CD4-positive, alpha-beta T cell (primary cell): ENCODE measurements at regions of chr4 and their contacts with region 1.

Region 1: DNA sequence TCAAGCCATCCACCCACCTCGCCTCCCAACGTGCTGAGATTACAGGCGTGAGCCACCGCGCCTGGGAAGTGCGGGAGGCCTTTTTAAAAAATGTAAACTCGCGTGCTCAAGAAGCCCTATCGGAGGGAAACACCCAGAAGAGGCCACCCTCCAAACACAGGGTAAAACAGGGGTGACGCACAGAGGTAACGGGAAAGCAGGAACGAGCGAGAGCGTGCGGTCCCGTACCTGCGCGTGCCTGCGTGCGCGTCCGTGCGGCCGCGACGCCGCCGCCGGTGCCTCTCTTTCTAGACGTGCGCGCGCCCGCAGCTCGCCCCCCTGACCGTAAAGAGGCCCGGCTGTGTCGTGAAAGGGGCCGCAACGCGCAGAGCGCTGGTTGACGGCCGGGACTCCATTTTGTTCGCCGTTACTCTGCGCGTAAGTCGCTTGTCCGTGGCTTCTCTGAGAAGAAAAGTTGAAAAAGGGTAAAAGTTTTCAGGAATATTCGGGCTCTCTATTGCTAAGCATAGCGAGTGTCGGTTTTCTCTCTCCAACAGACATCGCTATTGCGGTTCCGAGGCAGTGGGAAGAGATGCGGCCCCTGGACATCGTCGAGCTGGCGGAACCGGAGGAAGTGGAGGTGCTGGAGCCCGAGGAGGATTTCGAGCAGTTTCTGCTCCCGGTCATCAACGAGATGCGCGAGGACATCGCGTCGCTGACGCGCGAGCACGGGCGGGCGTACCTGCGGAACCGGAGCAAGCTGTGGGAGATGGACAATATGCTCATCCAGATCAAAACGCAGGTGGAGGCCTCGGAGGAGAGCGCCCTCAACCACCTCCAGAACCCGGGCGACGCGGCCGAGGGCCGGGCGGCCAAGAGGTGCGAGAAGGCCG is at the start of gene MRFAP1:
- DNase-seq: peak; percentile 90 to 99 (median 94)
- ATAC-seq: peak; percentile 78
- H3K4me3 ChIP-seq: peak within 1 kb of the TSS; percentile 77
- H3K4me3 Mint-ChIP-seq: peak within 1 kb of the TSS; percentile 100
- H3K27ac ChIP-seq: peak within 1 kb of the TSS; percentile 93 to 98
- H3K27ac Mint-ChIP-seq: peak within 1 kb of the TSS; percentile 99
- H3K4me1 ChIP-seq: peaks cover 38% of the 10 kb centered on the region
- H3K4me1 Mint-ChIP-seq: peaks cover 45% of the 10 kb centered on the region
- H3K27me3 ChIP-seq: no peaks in the 10 kb centered on the region
- H3K27me3 Mint-ChIP-seq: no peaks in the 10 kb centered on the region
- CTCF ChIP-seq: no peak
- total RNA-seq, gene MRFAP1: 172 to 181 TPM

Region 2: DNA sequence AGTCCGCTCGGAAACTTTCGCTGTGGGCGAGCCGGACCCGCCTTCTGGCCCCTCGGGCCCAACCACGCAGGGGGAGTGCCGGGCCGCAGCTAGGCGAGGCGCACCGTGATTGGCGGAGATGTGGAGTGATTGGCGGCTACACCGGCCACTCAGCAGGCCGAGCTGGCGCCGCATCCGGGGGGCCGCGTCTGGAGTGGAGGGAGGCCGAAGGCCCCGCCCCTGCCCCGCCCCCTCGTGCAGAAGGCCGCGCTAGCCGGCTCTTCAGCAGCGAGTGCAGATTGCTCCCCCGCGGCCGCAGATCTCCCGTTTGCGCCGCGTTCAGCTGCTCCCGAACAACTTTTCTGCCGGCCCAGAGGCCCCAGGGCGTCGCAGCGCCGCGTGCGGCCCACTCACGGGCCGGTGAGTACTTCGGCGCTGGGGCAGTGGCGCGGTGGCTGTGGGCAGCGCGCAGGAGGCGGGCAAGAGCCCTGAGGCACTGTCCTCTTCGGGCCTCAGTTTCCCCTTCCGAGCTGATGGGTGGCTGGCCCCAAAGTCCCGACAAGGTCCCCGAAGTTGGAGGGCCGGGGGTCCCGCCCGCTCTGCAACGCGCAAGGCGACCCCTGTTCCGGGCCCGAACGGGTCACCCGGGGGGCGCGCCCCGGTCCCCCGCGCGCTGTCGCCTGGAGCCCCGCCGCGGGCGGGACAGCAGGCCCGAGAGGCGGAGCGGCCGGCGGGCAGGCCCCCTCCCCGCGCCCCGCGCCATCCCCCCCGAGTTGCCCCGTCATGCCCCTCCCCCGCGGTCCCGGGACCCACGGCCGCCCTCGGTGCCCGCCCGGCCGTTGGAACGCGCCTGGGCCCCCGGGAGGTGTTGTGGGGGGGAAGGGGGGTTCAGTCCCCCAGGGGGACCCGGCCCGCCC is 370.7 kb before region 1 on chr4 and contains the start of gene WFS1:
- CTCF ChIA-PET with region 1: no interaction called
- POLR2A ChIA-PET with region 1: no interaction called
- intact Hi-C with region 1: loop called in 1 of 2 experiments (anchors 10 kb)
- DNase-seq: peak; percentile 89 to 99 (median 98)
- ATAC-seq: peak; percentile 99
- H3K4me3 ChIP-seq: peak within 1 kb of the TSS; percentile 64
- H3K4me3 Mint-ChIP-seq: peak within 1 kb of the TSS; percentile 92
- H3K27ac ChIP-seq: no peak within 1 kb of the TSS
- H3K27ac Mint-ChIP-seq: peak within 1 kb of the TSS; percentile 28
- H3K4me1 ChIP-seq: peaks cover 23% of the 10 kb centered on the region
- H3K4me1 Mint-ChIP-seq: peaks cover 16% of the 10 kb centered on the region
- H3K27me3 ChIP-seq: no peaks in the 10 kb centered on the region
- H3K27me3 Mint-ChIP-seq: no peaks in the 10 kb centered on the region
- CTCF ChIP-seq: no peak
- total RNA-seq, gene WFS1: 1.3 to 1.7 TPM

Region 3: DNA sequence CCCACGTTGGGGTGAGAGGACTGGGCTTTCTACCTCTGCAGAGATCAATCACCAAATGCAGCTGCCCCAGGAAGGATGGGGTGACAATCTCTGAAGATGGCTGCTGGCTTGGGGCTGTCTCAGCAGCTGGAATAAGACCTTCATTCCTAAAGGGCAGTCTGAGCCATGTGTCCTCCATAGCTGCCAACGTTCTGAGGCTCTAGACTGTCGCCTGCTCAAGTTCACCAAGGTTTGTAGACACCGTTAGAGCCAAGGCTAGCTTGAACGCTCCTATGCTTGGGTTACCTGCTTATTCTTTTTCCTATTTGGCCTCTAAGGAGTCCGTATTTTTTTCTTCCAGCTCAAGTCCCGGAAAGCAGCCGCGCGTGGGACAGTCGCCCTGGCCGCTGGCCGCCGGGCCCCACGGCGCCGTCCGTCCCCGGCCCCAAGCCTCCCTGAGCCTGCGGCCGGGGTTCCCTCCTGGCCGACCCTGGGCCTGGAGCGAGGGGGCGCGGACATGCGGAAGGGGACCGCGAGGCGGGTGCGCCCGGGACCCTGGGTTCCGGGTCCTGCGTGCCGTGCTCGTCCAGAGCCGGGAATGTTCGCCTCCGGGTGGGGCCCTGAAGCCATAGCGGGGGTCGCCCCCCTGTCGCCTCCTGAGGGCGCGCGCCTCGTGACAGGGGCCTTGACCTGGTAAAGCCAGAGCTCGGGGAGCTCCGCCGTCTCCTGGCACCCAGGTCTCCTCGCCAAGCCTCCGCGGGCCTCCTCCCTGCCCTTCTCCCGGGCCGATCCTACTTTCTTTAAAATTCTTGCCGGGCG is 23.3 kb after region 1 on chr4:
- CTCF ChIA-PET with region 1: interaction called, 12 read pairs
- POLR2A ChIA-PET with region 1: interaction called, 56 read pairs
- intact Hi-C with region 1: no loop called
- DNase-seq: no peak
- ATAC-seq: no peak
- H3K4me3 ChIP-seq: peak overlapping the region; percentile 48
- H3K4me3 Mint-ChIP-seq: peak overlapping the region; percentile 30
- H3K27ac ChIP-seq: no peak overlapping the region
- H3K27ac Mint-ChIP-seq: no peak overlapping the region
- H3K4me1 ChIP-seq: peaks cover 24% of the 10 kb centered on the region
- H3K4me1 Mint-ChIP-seq: no peaks in the 10 kb centered on the region
- H3K27me3 ChIP-seq: peaks cover 6 to 7% of the 10 kb centered on the region in 2 experiments
- H3K27me3 Mint-ChIP-seq: peaks cover 29% of the 10 kb centered on the region
- CTCF ChIP-seq: no peak

Region 4: GRCh38 chr4:6695660-6696630 is 55.4 kb after region 1 on chr4:
- CTCF ChIA-PET with region 1: no interaction called
- POLR2A ChIA-PET with region 1: interaction called, 34 read pairs
- intact Hi-C with region 1: no loop called
- DNase-seq: peak; percentile 49 to 89 (median 68)
- ATAC-seq: peak; percentile 94
- H3K4me3 ChIP-seq: peak overlapping the region; percentile 1
- H3K4me3 Mint-ChIP-seq: peak overlapping the region; percentile 39
- H3K27ac ChIP-seq: peak overlapping the region; percentile 75 to 83
- H3K27ac Mint-ChIP-seq: peak overlapping the region; percentile 89
- H3K4me1 ChIP-seq: peaks cover 92% of the 10 kb centered on the region
- H3K4me1 Mint-ChIP-seq: peaks cover 82% of the 10 kb centered on the region
- H3K27me3 ChIP-seq: no peaks in the 10 kb centered on the region
- H3K27me3 Mint-ChIP-seq: no peaks in the 10 kb centered on the region
- CTCF ChIP-seq: no peak

Region 5: GRCh38 chr4:6716018-6716911 is 75.7 kb after region 1 on chr4 and contains the start of gene BLOC1S4:
- CTCF ChIA-PET with region 1: interaction called, 3 read pairs
- POLR2A ChIA-PET with region 1: interaction called, 76 read pairs
- intact Hi-C with region 1: loop called (anchors 1 kb)
- DNase-seq: peak; percentile 79 to 98 (median 88)
- ATAC-seq: peak; percentile 79
- H3K4me3 ChIP-seq: peak within 1 kb of the TSS; percentile 95
- H3K4me3 Mint-ChIP-seq: peak within 1 kb of the TSS; percentile 99
- H3K27ac ChIP-seq: peak within 1 kb of the TSS; percentile 82 to 85
- H3K27ac Mint-ChIP-seq: peak within 1 kb of the TSS; percentile 99
- H3K4me1 ChIP-seq: peaks cover 31% of the 10 kb centered on the region
- H3K4me1 Mint-ChIP-seq: peaks cover 39% of the 10 kb centered on the region
- H3K27me3 ChIP-seq: no peaks in the 10 kb centered on the region
- H3K27me3 Mint-ChIP-seq: no peaks in the 10 kb centered on the region
- CTCF ChIP-seq: no peak
- total RNA-seq, gene BLOC1S4: 24.6 to 27.6 TPM

Region 6: GRCh38 chr4:6806924-6807636 is 166.6 kb after region 1 on chr4:
- CTCF ChIA-PET with region 1: no interaction called
- POLR2A ChIA-PET with region 1: no interaction called
- intact Hi-C with region 1: no loop called
- DNase-seq: peak in 2 of 14 experiments; percentile 22 to 31
- ATAC-seq: no peak
- H3K4me3 ChIP-seq: no peak overlapping the region
- H3K4me3 Mint-ChIP-seq: no peak overlapping the region
- H3K27ac ChIP-seq: no peak overlapping the region
- H3K27ac Mint-ChIP-seq: no peak overlapping the region
- H3K4me1 ChIP-seq: peaks cover 1% of the 10 kb centered on the region
- H3K4me1 Mint-ChIP-seq: peaks cover 60% of the 10 kb centered on the region
- H3K27me3 ChIP-seq: no peaks in the 10 kb centered on the region
- H3K27me3 Mint-ChIP-seq: no peaks in the 10 kb centered on the region
- CTCF ChIP-seq: no peak

Region 7: GRCh38 chr4:6942238-6942800 is 301.8 kb after region 1 on chr4:
- CTCF ChIA-PET with region 1: no interaction called
- POLR2A ChIA-PET with region 1: interaction called, 10 read pairs
- intact Hi-C with region 1: no loop called
- DNase-seq: peak in 13 of 14 experiments; percentile 17 to 79 (median 36)
- ATAC-seq: peak; percentile 86
- H3K4me3 ChIP-seq: peak overlapping the region; percentile 40
- H3K4me3 Mint-ChIP-seq: peak overlapping the region; percentile 83
- H3K27ac ChIP-seq: peak overlapping the region; percentile 62 to 81
- H3K27ac Mint-ChIP-seq: peak overlapping the region; percentile 95
- H3K4me1 ChIP-seq: peaks cover 86% of the 10 kb centered on the region
- H3K4me1 Mint-ChIP-seq: peaks cover 73% of the 10 kb centered on the region
- H3K27me3 ChIP-seq: no peaks in the 10 kb centered on the region
- H3K27me3 Mint-ChIP-seq: no peaks in the 10 kb centered on the region
- CTCF ChIP-seq: no peak

Region 8: GRCh38 chr4:7067452-7068278 is 427.1 kb after region 1 on chr4 and contains the start of gene GRPEL1:
- CTCF ChIA-PET with region 1: no interaction called
- POLR2A ChIA-PET with region 1: interaction called, 25 read pairs
- intact Hi-C with region 1: loop called (anchors 2 to 5 kb)
- DNase-seq: peak; percentile 100
- ATAC-seq: peak; percentile 88
- H3K4me3 ChIP-seq: peak within 1 kb of the TSS; percentile 76
- H3K4me3 Mint-ChIP-seq: peak within 1 kb of the TSS; percentile 97
- H3K27ac ChIP-seq: peak within 1 kb of the TSS; percentile 71 to 78
- H3K27ac Mint-ChIP-seq: peak within 1 kb of the TSS; percentile 93
- H3K4me1 ChIP-seq: peaks cover 45% of the 10 kb centered on the region
- H3K4me1 Mint-ChIP-seq: peaks cover 60% of the 10 kb centered on the region
- H3K27me3 ChIP-seq: no peaks in the 10 kb centered on the region
- H3K27me3 Mint-ChIP-seq: no peaks in the 10 kb centered on the region
- CTCF ChIP-seq: no peak
- total RNA-seq, gene GRPEL1: 55.6 to 58.6 TPM